Heart right ventricle (tissue), 16 donors: ENCODE measurements at regions of chr12 and their contacts with region 1.

Region 1: GRCh38 chr12:43069768-43070221 is 480.2 kb upstream of the PRICKLE1 start:
- DNase-seq: peak; percentile 7 to 34
- ATAC-seq: peak in 1 of 8 donors; percentile 82
- H3K4me3 ChIP-seq: no peak overlapping the region
- H3K27ac ChIP-seq: no peak overlapping the region
- H3K4me1 ChIP-seq: no peaks in the 10 kb centered on the region
- H3K27me3 ChIP-seq: no peaks in the 10 kb centered on the region
- CTCF ChIP-seq: no peak

Region 2: GRCh38 chr12:43361031-43361710 is 291.4 kb after region 1 on chr12:
- intact Hi-C with region 1: no loop called
- DNase-seq: no peak
- ATAC-seq: no peak
- H3K4me3 ChIP-seq: no peak overlapping the region
- H3K27ac ChIP-seq: no peak overlapping the region
- H3K4me1 ChIP-seq: no peaks in the 10 kb centered on the region
- H3K27me3 ChIP-seq: no peaks in the 10 kb centered on the region
- CTCF ChIP-seq: no peak

Region 3: GRCh38 chr12:44235674-44236073 is 1165.9 kb after region 1 on chr12:
- intact Hi-C with region 1: loop called in 1 of 10 experiments (anchors 5 kb)
- DNase-seq: no peak
- ATAC-seq: no peak
- H3K4me3 ChIP-seq: no peak overlapping the region
- H3K27ac ChIP-seq: no peak overlapping the region
- H3K4me1 ChIP-seq: no peaks in the 10 kb centered on the region
- H3K27me3 ChIP-seq: no peaks in the 10 kb centered on the region
- CTCF ChIP-seq: no peak